ENCODE measurements at regions of chr14 and their contacts with region 1.

Region 1: DNA sequence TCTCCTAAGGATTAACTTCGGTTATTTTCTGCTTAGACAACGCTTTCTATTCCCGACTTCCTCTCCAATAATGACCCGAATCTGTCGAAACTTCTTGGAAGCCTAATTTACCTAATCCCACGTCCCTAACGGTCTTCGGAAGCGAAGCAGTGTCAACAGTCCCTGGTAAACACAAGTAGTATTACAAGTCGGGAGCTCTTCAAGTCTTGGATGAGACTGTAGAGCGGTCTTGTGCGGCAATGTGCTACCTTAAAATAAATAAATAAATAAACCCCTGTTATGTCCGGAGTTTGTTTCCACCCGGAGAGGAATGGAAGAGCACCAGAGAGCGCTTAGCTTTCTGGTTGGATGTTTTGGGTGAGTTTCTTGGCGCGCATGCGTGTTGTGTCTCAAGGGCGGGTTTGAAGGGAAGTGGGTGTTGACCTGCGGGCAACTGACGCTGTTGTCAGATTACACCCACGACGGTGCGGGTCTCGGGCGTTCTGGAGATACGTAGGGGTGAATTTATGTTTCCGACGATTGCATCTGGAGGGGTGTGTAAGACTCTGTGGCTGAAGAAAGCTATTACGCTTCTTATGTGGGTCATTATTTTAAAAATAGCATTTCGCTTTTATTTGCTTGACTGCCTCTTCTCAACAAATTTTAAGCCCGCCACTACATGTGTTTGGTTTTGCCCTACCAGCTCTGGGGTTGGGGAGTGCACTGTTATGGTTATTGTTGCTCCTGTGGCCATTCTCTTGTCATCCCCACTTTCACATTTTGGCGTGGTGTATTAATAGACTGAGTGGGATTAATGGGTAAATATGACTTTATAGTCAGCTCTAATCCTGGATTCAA is at the starts of genes KIAA0586 and TIMM9:
- DNase-seq: peak; percentile 98
- H3K4me3 Mint-ChIP-seq: peak within 1 kb of the TSS; percentile 86
- H3K27ac Mint-ChIP-seq: peak within 1 kb of the TSS; percentile 91
- H3K4me1 Mint-ChIP-seq: peaks cover 45% of the 10 kb centered on the region
- H3K27me3 Mint-ChIP-seq: peaks cover 2% of the 10 kb centered on the region
- total RNA-seq, gene KIAA0586: 30.3 to 34.9 TPM
- total RNA-seq, gene TIMM9: 61.4 to 66.7 TPM

Region 2: DNA sequence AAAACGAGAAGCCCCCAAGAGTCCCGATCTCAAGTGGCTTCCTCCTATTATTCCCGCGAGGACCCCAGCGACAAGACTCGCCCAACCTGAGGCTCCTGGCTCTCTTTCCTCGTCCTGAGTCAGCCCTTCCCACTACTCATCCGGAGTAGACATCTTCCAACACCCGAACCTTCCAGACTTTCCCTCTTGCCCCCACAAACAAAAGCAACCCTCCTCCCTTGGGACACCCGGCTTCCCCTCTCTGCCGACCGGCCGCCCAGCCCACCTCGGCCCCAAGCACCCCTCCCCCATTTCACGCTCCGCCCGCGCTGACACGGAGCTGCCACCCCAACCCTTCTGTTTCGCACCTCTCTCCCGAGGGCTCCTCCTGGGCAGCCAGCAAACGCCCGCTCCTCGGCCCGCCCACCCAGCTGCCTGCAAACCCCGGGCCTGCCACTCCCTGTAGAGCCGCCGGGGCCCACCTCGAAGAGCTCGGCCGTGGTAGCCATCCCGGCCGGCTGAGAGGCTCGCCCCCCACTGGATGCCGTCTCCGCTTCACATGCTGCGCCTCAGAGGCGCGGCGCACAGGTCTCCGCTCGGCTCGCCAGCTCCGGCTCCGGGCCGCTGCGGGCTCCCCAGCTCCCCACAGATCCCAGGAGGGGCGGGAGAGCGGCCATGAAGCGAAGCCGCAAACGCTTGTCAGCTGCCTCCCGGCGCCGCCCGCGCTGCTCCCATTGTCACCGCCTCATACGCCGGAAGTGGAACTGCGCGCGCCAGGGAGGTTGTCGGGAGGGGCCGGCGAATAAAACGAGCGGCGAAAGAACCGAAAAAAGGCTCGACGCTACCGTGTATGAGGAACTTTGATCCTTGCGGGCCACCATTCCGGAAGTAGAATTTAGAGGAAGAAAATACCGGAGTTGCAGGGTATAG is 1159.1 kb before region 1 on chr14 and contains the starts of genes AP5M1 and EXOC5:
- CTCF ChIA-PET with region 1: no interaction called
- POLR2A ChIA-PET with region 1: interaction called, 4 read pairs
- intact Hi-C with region 1: loop called (anchors 2 kb)
- DNase-seq: peak; percentile 96
- H3K4me3 Mint-ChIP-seq: peak within 1 kb of the TSS; percentile 99
- H3K27ac Mint-ChIP-seq: peak within 1 kb of the TSS; percentile 99
- H3K4me1 Mint-ChIP-seq: peaks cover 48% of the 10 kb centered on the region
- H3K27me3 Mint-ChIP-seq: no peaks in the 10 kb centered on the region
- total RNA-seq, gene AP5M1: 27.7 to 31.1 TPM
- total RNA-seq, gene EXOC5: 82.1 to 82.6 TPM

Region 3: DNA sequence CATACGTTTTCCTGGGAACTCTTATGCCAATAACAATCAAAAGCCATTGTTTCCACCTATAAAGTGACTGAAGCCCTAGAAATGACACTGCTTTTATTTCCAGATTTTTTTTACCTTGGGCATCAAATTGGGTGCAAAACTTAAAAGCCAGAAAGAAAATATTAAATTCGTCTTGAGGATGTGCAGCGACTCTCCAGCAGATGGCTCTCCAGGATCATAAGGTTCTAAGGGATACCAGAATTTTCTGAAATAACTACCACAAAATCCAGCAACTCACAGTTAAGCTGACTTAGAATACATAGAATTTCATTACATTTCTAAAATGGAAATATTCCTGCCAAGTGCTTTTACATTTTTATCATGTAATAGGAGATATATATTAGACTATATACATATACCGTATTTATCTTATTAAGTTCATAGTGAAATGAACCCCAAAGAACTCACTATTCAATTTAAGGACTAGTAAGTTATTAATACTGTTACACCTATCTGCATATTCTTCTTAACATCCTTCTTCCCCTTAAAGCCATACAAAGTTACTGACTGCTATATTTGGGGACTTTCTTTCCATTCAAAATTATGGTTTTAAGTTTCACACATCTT is 319.4 kb before region 1 on chr14:
- CTCF ChIA-PET with region 1: no interaction called
- POLR2A ChIA-PET with region 1: no interaction called
- intact Hi-C with region 1: loop called (anchors 1 kb)
- DNase-seq: peak; percentile 49
- H3K4me3 Mint-ChIP-seq: no peak overlapping the region
- H3K27ac Mint-ChIP-seq: no peak overlapping the region
- H3K4me1 Mint-ChIP-seq: peaks cover 6% of the 10 kb centered on the region
- H3K27me3 Mint-ChIP-seq: peaks cover 9% of the 10 kb centered on the region

Region 4: GRCh38 chr14:58244556-58245387 is 182.7 kb before region 1 on chr14 and contains the start of gene PSMA3:
- CTCF ChIA-PET with region 1: interaction called, 3 read pairs
- POLR2A ChIA-PET with region 1: interaction called, 10 read pairs
- intact Hi-C with region 1: loop called (anchors 1 kb)
- DNase-seq: peak; percentile 99
- H3K4me3 Mint-ChIP-seq: peak within 1 kb of the TSS; percentile 86
- H3K27ac Mint-ChIP-seq: peak within 1 kb of the TSS; percentile 90
- H3K4me1 Mint-ChIP-seq: peaks cover 42% of the 10 kb centered on the region
- H3K27me3 Mint-ChIP-seq: no peaks in the 10 kb centered on the region
- total RNA-seq, gene PSMA3: 349 to 355 TPM

Region 5: GRCh38 chr14:58395812-58396788 is 31.4 kb before region 1 on chr14 and contains the start of gene TOMM20L:
- CTCF ChIA-PET with region 1: interaction called, 11 read pairs
- POLR2A ChIA-PET with region 1: interaction called, 3 read pairs
- intact Hi-C with region 1: loop called (anchors 2 kb)
- DNase-seq: peak; percentile 80
- H3K4me3 Mint-ChIP-seq: peak within 1 kb of the TSS; percentile 66
- H3K27ac Mint-ChIP-seq: peak within 1 kb of the TSS; percentile 58
- H3K4me1 Mint-ChIP-seq: peaks cover 11% of the 10 kb centered on the region
- H3K27me3 Mint-ChIP-seq: no peaks in the 10 kb centered on the region
- total RNA-seq, gene TOMM20L: not detected

Region 6: DNA sequence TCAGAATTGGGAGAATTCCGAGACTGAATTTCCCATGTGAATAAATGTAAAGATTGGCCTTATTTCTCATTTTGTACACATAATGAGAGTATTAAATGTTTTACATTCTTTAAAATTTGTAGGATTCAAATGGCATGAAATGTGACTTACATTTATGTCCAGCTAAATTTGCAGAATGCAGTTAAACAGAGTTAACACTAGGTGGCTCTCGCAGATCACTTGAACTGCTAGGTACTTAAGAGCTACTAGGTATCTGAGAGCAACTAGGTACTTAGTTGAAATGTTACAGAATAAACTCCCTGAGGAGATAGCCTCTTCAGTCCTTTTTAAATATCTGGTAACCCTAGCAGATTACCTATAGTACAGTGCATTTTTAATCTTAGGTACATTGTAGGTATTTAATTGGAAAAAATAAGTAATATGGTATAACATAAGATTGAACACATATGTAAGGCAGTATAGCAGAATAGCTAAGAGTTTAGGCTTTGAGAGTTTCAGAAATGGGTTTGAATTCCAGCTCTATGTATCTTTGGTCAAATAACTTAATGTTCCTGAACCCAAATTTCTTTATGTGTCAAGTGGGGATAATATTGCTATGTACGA is 73.8 kb after region 1 on chr14:
- CTCF ChIA-PET with region 1: no interaction called
- POLR2A ChIA-PET with region 1: no interaction called
- intact Hi-C with region 1: no loop called
- DNase-seq: no peak
- H3K4me3 Mint-ChIP-seq: no peak overlapping the region
- H3K27ac Mint-ChIP-seq: no peak overlapping the region
- H3K4me1 Mint-ChIP-seq: no peaks in the 10 kb centered on the region
- H3K27me3 Mint-ChIP-seq: no peaks in the 10 kb centered on the region

Region 7: GRCh38 chr14:58637391-58638230 is 210.1 kb after region 1 on chr14 and contains the start of gene DACT1:
- CTCF ChIA-PET with region 1: no interaction called
- POLR2A ChIA-PET with region 1: no interaction called
- intact Hi-C with region 1: loop called (anchors 1 kb)
- DNase-seq: peak; percentile 72
- H3K4me3 Mint-ChIP-seq: peak within 1 kb of the TSS; percentile 79
- H3K27ac Mint-ChIP-seq: peak within 1 kb of the TSS; percentile 53
- H3K4me1 Mint-ChIP-seq: peaks cover 33% of the 10 kb centered on the region
- H3K27me3 Mint-ChIP-seq: peaks cover 37% of the 10 kb centered on the region
- total RNA-seq, gene DACT1: 4.3 to 4.7 TPM

Region 8: GRCh38 chr14:59483900-59484638 is 1056.6 kb after region 1 on chr14 and contains the starts of genes JKAMP and L3HYPDH:
- CTCF ChIA-PET with region 1: no interaction called
- POLR2A ChIA-PET with region 1: interaction called, 4 read pairs
- intact Hi-C with region 1: loop called (anchors 2 kb)
- DNase-seq: peak; percentile 98
- H3K4me3 Mint-ChIP-seq: peak within 1 kb of the TSS; percentile 92
- H3K27ac Mint-ChIP-seq: peak within 1 kb of the TSS; percentile 86
- H3K4me1 Mint-ChIP-seq: peaks cover 57% of the 10 kb centered on the region
- H3K27me3 Mint-ChIP-seq: no peaks in the 10 kb centered on the region
- total RNA-seq, gene JKAMP: 21.0 to 26.4 TPM
- total RNA-seq, gene L3HYPDH: 7.8 to 7.9 TPM